ENCODE measurements at regions of chr11 and their contacts with region 1.

Region 1: GRCh38 chr11:18321980-18322711 is at the starts of genes GTF2H1 and HPS5:
- DNase-seq: peak; percentile 97
- ATAC-seq: peak; percentile 90
- H3K4me3 Mint-ChIP-seq: peak within 1 kb of the TSS; percentile 90
- H3K27ac Mint-ChIP-seq: peak within 1 kb of the TSS; percentile 100
- H3K4me1 Mint-ChIP-seq: peaks cover 55% of the 10 kb centered on the region
- H3K27me3 Mint-ChIP-seq: no peaks in the 10 kb centered on the region
- CTCF ChIP-seq: no peak
- total RNA-seq, gene GTF2H1: 44.5 to 46.6 TPM
- total RNA-seq, gene HPS5: 16.0 to 17.2 TPM

Region 2: DNA sequence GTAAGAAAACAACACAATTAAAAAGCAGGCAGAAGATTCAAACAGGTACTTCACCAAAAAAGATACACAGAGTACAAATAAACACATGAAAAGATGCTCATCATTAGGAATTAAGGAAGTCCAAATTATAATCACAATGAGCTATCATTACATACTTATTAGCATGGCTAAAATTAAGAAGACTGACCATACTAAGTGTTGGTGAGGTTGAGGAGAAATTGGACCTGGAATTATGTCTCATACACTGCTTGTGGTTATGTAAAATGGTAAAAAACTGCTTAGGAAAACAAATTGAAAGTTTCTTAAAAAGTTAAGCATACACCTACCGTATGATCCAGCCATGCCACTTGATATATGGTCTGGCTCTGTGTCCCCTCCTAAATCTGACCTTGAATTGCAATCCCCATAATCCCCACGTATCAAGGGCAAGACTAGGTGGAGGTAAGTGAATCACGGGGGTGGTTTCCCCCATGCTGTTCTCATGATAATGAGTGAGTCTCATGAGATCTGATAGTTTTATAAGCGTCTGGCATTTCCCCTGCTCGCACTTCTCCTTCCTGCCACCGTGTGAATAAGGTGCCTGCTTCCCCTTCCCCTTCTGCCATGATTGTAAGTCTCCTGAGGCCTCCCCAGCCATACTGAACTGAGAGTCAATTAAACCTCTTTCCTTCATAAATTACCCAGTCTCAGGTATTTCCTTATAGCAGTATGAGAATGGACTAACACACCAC is 221.1 kb before region 1 on chr11:
- CTCF ChIA-PET with region 1: no interaction called
- POLR2A ChIA-PET with region 1: no interaction called
- intact Hi-C with region 1: no loop called
- DNase-seq: peak; percentile 53
- ATAC-seq: no peak
- H3K4me3 Mint-ChIP-seq: no peak overlapping the region
- H3K27ac Mint-ChIP-seq: peak overlapping the region; percentile 52
- H3K4me1 Mint-ChIP-seq: peaks cover 38% of the 10 kb centered on the region
- H3K27me3 Mint-ChIP-seq: no peaks in the 10 kb centered on the region
- CTCF ChIP-seq: no peak

Region 3: DNA sequence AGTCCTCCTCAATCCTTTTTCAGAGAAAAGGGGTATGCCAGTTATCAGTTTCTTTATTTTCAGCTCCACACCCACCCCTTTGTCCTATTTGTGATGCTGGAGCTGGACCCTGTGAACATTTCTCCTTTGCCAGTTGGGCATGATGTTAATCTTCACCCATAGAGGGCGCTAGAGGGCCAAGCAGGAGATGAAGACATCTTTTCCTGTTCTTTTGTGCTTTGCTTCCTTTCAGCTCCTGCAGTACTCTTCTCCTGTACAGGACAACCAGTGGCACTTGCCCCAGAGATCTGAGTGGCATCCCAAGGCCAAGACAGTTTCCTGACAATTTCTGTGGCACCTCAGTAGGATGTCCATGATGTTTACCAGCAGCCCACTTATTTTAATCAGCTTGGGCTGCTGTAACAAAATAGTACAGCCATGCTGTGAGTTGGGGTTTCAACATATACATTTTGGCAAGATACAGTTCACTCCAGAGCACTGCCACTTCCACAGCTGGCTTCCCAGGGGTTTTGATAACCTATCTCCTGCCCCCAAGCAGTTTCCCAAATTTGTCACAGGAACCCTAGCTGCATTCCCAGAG is 78.3 kb before region 1 on chr11:
- CTCF ChIA-PET with region 1: interaction called, 26 read pairs
- POLR2A ChIA-PET with region 1: no interaction called
- intact Hi-C with region 1: no loop called
- DNase-seq: peak; percentile 74
- ATAC-seq: no peak
- H3K4me3 Mint-ChIP-seq: no peak overlapping the region
- H3K27ac Mint-ChIP-seq: no peak overlapping the region
- H3K4me1 Mint-ChIP-seq: peaks cover 8% of the 10 kb centered on the region
- H3K27me3 Mint-ChIP-seq: peaks cover 11% of the 10 kb centered on the region
- CTCF ChIP-seq: peak; percentile 91

Region 4: DNA sequence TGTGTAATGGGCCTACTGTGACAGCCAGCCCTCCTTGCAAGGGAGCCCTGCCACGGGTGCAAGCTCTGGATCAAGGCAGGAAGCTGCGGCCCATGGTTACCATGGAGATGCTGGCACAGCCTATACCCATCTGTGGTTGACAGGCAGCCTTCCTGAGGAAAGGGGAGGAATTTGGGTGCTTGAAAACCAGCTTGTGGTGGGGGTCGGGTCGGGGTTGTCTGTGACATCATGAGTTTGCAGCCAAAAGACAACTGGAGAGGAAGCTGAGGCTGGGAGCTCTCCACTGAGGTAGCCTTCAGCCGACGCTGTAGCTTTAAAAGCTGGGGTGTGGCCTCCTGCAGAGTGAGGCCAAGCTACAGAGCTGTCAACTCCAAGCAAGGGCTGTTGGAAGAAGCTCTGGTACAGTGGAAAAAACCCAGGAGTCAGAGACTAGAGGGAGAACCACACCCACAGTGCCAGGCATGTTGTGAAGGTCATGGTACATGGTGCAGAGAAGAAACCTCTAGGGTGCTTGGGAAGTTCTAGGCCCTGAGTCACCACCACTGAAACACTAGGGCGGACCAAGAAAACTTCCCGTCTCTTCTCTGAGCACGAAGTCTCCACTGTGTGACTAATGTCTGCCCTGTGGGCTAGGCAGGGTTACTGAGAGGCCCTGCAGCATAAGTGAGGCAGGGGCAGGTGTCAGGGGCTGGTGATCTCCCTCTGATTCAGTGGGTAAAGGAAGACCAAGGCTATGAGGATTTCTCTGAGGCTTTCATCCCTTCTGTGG is 61.4 kb after region 1 on chr11:
- CTCF ChIA-PET with region 1: interaction called, 3 read pairs
- POLR2A ChIA-PET with region 1: interaction called, 17 read pairs
- intact Hi-C with region 1: loop called (anchors 5 kb)
- DNase-seq: peak; percentile 92
- ATAC-seq: peak; percentile 95
- H3K4me3 Mint-ChIP-seq: peak overlapping the region; percentile 66
- H3K27ac Mint-ChIP-seq: peak overlapping the region; percentile 100
- H3K4me1 Mint-ChIP-seq: peaks cover 36% of the 10 kb centered on the region
- H3K27me3 Mint-ChIP-seq: no peaks in the 10 kb centered on the region
- CTCF ChIP-seq: no peak

Region 5: DNA sequence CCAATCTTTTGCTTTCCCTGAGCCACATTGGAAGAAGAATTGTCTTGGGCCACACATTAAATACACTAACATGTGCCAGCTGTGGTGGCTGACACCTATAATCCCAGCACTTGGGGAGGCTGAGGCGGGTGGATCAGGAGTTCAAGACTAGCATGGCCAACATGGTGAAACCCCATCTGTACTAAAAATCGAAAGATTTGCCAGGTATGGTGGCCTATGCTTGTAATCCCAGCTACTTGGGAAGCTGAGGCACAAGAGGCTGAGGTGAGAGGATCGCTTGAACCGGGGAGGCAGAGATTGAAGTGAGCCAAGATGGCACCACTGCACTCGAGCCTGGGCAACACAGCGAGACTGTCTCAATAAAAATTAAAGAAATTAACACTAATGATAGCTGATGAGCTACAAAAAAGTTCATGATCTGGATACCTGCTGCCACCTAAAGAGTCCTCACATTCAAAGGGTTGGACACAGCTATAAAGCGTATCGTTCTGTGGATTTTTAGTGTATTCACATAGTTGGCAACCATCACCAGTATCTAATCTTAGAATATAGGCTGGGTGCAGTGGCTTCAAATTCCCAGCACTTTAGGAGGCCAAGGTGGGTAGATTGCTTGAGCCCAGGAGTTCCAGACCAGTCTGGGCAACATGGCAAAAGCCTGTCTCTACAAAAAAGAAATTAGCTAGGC is 86.6 kb after region 1 on chr11:
- CTCF ChIA-PET with region 1: no interaction called
- POLR2A ChIA-PET with region 1: interaction called, 10 read pairs
- intact Hi-C with region 1: no loop called
- DNase-seq: peak; percentile 43
- ATAC-seq: peak; percentile 30
- H3K4me3 Mint-ChIP-seq: no peak overlapping the region
- H3K27ac Mint-ChIP-seq: no peak overlapping the region
- H3K4me1 Mint-ChIP-seq: peaks cover 12% of the 10 kb centered on the region
- H3K27me3 Mint-ChIP-seq: no peaks in the 10 kb centered on the region
- CTCF ChIP-seq: no peak

Region 6: GRCh38 chr11:18634140-18635032 is 312.2 kb after region 1 on chr11 and contains the start of gene SPTY2D1:
- CTCF ChIA-PET with region 1: no interaction called
- POLR2A ChIA-PET with region 1: interaction called, 3 read pairs
- intact Hi-C with region 1: loop called (anchors 5 kb)
- DNase-seq: peak; percentile 100
- ATAC-seq: peak; percentile 98
- H3K4me3 Mint-ChIP-seq: peak within 1 kb of the TSS; percentile 89
- H3K27ac Mint-ChIP-seq: peak within 1 kb of the TSS; percentile 97
- H3K4me1 Mint-ChIP-seq: peaks cover 21% of the 10 kb centered on the region
- H3K27me3 Mint-ChIP-seq: no peaks in the 10 kb centered on the region
- CTCF ChIP-seq: no peak
- total RNA-seq, gene SPTY2D1: 21.3 TPM

Measured in activated CD8-positive, alpha-beta T cell treated with anti-CD3 and anti-CD28 coated beads for 36 hours (primary cell).